ENCODE measurements at regions of chr20 and their contacts with region 1.

Region 1: GRCh38 chr20:2523919-2524708 is 12.3 kb upstream of the TMC2 start:
- DNase-seq: peak; percentile 93
- ATAC-seq: peak; percentile 68
- H3K4me3 Mint-ChIP-seq: peak overlapping the region; percentile 74
- H3K27ac Mint-ChIP-seq: peak overlapping the region; percentile 86
- H3K4me1 Mint-ChIP-seq: peaks cover 7% of the 10 kb centered on the region
- H3K27me3 Mint-ChIP-seq: peaks cover 6% of the 10 kb centered on the region
- CTCF ChIP-seq: peak; percentile 84

Region 2: GRCh38 chr20:2451939-2452732 is 72.0 kb before region 1 on chr20:
- CTCF ChIA-PET with region 1: interaction called, 12 read pairs
- POLR2A ChIA-PET with region 1: no interaction called
- intact Hi-C with region 1: no loop called
- DNase-seq: peak; percentile 79
- ATAC-seq: peak; percentile 72
- H3K4me3 Mint-ChIP-seq: no peak overlapping the region
- H3K27ac Mint-ChIP-seq: no peak overlapping the region
- H3K4me1 Mint-ChIP-seq: peaks cover 31% of the 10 kb centered on the region
- H3K27me3 Mint-ChIP-seq: no peaks in the 10 kb centered on the region
- CTCF ChIP-seq: peak; percentile 91

Region 3: DNA sequence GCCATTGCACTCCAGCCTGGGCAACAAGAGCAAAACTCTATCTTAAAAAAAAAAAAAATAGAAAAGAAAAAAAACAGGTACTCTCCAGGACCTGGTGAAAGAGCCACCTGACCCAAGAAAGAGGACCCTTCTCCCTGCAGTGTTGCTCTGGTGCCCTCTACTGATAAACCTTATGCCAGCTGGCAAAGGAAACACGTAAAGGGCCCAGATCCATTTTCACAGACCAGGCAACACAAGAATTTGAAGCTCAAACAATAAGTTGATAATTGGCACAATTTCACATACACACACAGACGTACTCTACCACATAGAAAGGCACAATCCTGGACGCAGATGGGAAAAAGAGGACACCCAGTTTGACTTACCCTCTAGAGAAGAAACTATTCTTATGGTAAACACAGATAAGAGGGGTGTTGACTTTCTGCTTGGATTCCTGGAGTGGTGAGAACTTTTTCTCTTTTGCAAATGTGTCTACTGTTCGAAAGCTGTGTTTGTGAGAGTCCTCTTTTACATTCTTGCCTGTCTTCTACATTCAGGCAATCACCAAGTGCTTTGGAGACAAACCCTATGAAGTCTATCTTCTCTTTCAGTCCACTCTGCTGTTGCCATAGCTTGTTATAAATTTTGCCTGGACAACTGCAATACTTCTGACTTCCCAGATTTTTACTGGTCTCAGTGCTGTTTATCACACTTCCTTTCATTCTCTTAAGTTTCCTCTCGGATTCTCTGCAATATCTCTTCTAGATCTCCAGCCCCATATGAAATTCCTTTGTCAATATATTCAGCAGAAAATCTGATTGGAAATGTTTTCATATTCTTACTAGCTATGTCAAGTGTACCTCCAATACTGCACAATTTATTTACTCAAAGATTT is 47.1 kb before region 1 on chr20:
- CTCF ChIA-PET with region 1: interaction called, 10 read pairs
- POLR2A ChIA-PET with region 1: interaction called, 4 read pairs
- intact Hi-C with region 1: no loop called
- DNase-seq: no peak
- ATAC-seq: no peak
- H3K4me3 Mint-ChIP-seq: no peak overlapping the region
- H3K27ac Mint-ChIP-seq: no peak overlapping the region
- H3K4me1 Mint-ChIP-seq: peaks cover 6% of the 10 kb centered on the region
- H3K27me3 Mint-ChIP-seq: no peaks in the 10 kb centered on the region
- CTCF ChIP-seq: no peak

Region 4: DNA sequence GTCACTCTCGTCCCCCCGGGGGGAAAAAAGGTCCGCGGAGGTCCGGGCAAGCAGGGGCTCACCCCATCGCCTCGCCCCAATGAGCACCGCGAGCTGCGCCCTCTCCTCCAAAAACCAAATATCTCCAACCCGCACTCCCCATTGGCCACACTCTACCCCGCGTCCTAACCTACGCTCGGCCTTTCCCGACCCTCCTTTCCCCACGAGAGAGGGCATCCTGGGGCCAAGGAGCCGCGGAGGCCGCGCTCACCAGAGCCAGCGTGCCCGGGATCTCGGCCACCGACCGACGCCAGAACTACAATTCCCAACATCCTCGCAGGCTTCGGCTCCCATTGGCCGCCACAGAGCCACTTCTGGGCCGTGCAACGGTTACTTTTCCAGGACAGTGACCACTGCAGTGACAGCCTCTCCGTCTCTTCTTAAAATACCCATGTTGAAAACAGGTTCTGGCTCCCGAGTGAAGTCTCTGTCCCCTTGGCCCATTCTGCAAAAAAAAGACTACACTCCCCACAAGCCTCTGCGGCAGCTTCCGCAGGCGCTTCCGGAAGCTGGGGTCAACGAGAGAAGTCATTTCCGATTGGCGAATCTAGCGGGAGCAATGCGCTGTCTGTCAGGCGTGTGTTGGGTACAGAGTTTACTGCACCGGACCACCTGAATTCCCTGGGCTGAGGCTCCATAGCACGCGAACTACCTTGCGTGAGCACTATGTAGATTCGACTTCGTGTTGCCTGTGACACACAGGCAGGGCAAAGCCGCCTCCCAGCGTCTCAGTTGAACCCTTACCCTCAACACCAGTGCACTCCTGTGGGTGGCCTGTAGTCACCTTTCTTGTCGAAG is 15.3 kb before region 1 on chr20 and contains the start of gene ZNF343:
- CTCF ChIA-PET with region 1: interaction called, 147 read pairs
- POLR2A ChIA-PET with region 1: interaction called, 5 read pairs
- intact Hi-C with region 1: no loop called
- DNase-seq: peak; percentile 85
- ATAC-seq: peak; percentile 95
- H3K4me3 Mint-ChIP-seq: peak within 1 kb of the TSS; percentile 96
- H3K27ac Mint-ChIP-seq: peak within 1 kb of the TSS; percentile 98
- H3K4me1 Mint-ChIP-seq: peaks cover 19% of the 10 kb centered on the region
- H3K27me3 Mint-ChIP-seq: peaks cover 8% of the 10 kb centered on the region
- CTCF ChIP-seq: no peak
- total RNA-seq, gene ZNF343: 8.5 to 9.5 TPM

Region 5: GRCh38 chr20:2558581-2559278 is 34.6 kb after region 1 on chr20:
- CTCF ChIA-PET with region 1: interaction called, 10 read pairs
- POLR2A ChIA-PET with region 1: no interaction called
- intact Hi-C with region 1: no loop called
- DNase-seq: no peak
- ATAC-seq: no peak
- H3K4me3 Mint-ChIP-seq: peak overlapping the region; percentile 17
- H3K27ac Mint-ChIP-seq: no peak overlapping the region
- H3K4me1 Mint-ChIP-seq: no peaks in the 10 kb centered on the region
- H3K27me3 Mint-ChIP-seq: peaks cover 42% of the 10 kb centered on the region
- CTCF ChIP-seq: no peak

Region 6: GRCh38 chr20:2643708-2644107 is 119.6 kb after region 1 on chr20:
- CTCF ChIA-PET with region 1: interaction called, 103 read pairs
- POLR2A ChIA-PET with region 1: no interaction called
- intact Hi-C with region 1: loop called (anchors 10 kb)
- DNase-seq: no peak
- ATAC-seq: peak; percentile 60
- H3K4me3 Mint-ChIP-seq: no peak overlapping the region
- H3K27ac Mint-ChIP-seq: no peak overlapping the region
- H3K4me1 Mint-ChIP-seq: peaks cover 3% of the 10 kb centered on the region
- H3K27me3 Mint-ChIP-seq: no peaks in the 10 kb centered on the region
- CTCF ChIP-seq: no peak

Region 7: GRCh38 chr20:2671977-2672376 is 147.9 kb after region 1 on chr20:
- CTCF ChIA-PET with region 1: interaction called, 12 read pairs
- POLR2A ChIA-PET with region 1: no interaction called
- intact Hi-C with region 1: no loop called
- DNase-seq: no peak
- ATAC-seq: peak; percentile 64
- H3K4me3 Mint-ChIP-seq: no peak overlapping the region
- H3K27ac Mint-ChIP-seq: no peak overlapping the region
- H3K4me1 Mint-ChIP-seq: no peaks in the 10 kb centered on the region
- H3K27me3 Mint-ChIP-seq: peaks cover 3% of the 10 kb centered on the region
- CTCF ChIP-seq: no peak

Measured in activated CD8-positive, alpha-beta T cell treated with anti-CD3 and anti-CD28 coated beads for 36 hours (primary cell).